Activated naive CD4-positive, alpha-beta T cell treated with anti-CD3 and anti-CD28 coated beads for 36 hours (primary cell): ENCODE measurements at regions of chr19 and their contacts with region 1.

Region 1: GRCh38 chr19:9857920-9858746 is 23.0 kb downstream of the PIN1 start:
- DNase-seq: peak; percentile 32
- H3K4me3 Mint-ChIP-seq: peak overlapping the region; percentile 53
- H3K27ac Mint-ChIP-seq: peak overlapping the region; percentile 91
- H3K4me1 Mint-ChIP-seq: peaks cover 67% of the 10 kb centered on the region
- H3K27me3 Mint-ChIP-seq: no peaks in the 10 kb centered on the region

Region 2: DNA sequence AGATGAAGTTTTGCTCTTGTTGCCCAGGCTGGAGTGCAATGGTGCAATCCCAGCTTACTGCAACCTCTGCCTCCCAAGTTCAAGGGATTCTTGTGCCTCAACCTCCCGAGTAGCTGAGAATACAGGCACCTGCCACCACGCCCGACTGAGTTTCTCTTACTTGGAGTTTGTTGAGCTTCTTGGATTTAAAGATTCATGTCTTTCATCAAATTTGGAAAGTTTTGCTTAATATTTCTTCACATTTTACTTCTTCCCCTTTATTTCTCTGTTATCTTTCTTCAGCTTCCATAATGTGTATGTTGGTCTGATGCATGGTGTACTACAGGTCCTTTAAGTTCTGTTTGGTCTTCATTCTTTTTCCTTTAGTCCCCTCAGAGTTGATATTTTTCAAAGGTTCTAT is 350.8 kb before region 1 on chr19:
- CTCF ChIA-PET with region 1: no interaction called
- intact Hi-C with region 1: no loop called
- DNase-seq: no peak
- H3K4me3 Mint-ChIP-seq: no peak overlapping the region
- H3K27ac Mint-ChIP-seq: no peak overlapping the region
- H3K4me1 Mint-ChIP-seq: no peaks in the 10 kb centered on the region
- H3K27me3 Mint-ChIP-seq: no peaks in the 10 kb centered on the region

Region 3: DNA sequence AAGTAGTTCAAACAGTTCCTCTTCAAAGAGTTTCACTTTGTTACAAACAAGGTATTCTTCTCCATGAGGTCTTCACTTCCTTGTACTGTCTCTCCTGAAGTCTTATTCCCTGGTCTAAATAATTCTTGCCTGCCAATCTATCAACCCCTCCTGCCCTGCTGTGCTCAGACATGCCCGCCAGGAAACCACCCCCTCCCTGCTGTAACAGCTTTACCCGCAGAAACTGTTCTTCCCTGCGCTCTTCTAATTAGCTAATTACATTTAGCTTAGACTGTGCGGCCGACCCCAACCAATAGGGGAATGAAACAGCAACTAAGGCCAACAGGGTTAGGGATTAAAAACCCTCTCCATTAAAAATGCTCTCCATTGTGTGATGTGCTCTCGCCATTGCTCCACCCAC is 136.3 kb before region 1 on chr19:
- CTCF ChIA-PET with region 1: no interaction called
- intact Hi-C with region 1: no loop called
- DNase-seq: peak; percentile 5
- H3K4me3 Mint-ChIP-seq: no peak overlapping the region
- H3K27ac Mint-ChIP-seq: no peak overlapping the region
- H3K4me1 Mint-ChIP-seq: peaks cover 2% of the 10 kb centered on the region
- H3K27me3 Mint-ChIP-seq: peaks cover 4% of the 10 kb centered on the region

Region 4: GRCh38 chr19:9834726-9835506 is 23.2 kb before region 1 on chr19 and contains the start of gene PIN1:
- CTCF ChIA-PET with region 1: interaction called, 3 read pairs
- intact Hi-C with region 1: loop called (anchors 2 kb)
- DNase-seq: peak; percentile 99
- H3K4me3 Mint-ChIP-seq: peak within 1 kb of the TSS; percentile 84
- H3K27ac Mint-ChIP-seq: peak within 1 kb of the TSS; percentile 85
- H3K4me1 Mint-ChIP-seq: peaks cover 27% of the 10 kb centered on the region
- H3K27me3 Mint-ChIP-seq: no peaks in the 10 kb centered on the region
- total RNA-seq, gene PIN1: 84.5 to 88.1 TPM